ENCODE measurements at regions of chr22 and their contacts with region 1.

Region 1: DNA sequence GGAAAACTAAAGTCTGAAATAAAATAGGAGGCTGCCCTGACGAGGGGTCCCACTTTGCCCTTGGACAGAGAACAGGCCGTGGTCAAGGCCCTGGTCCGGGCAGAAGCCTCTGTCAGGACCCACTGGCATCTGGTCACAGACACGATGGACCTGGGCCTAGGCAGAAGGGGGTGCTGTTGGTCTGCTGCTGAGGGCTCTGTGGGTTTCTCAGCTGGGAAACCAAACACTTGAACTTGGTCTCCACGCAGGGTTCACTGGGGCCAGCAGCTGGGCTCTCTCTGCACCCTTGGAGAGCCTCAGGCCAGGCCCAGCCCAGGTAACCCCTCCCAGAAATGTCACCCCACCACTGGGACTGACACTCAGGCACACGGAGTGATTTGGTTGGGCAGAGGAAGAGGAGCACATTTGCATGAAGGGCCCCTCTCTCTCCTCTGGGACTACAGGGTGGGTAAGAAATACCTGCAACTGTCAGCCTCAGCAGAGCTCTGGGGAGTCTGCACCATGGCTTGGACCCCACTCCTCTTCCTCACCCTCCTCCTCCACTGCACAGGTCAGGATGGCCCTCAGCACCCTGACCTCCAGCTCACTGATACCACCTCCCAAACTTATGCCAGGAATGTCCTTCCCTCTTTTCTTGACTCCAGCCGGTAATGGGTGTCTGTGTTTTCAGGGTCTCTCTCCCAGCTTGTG is 48.1 kb upstream of the TOP3B start:
- DNase-seq: peak; percentile 62
- ATAC-seq: peak; percentile 79
- H3K4me3 Mint-ChIP-seq: peak overlapping the region; percentile 84
- H3K27ac Mint-ChIP-seq: peak overlapping the region; percentile 97
- H3K4me1 Mint-ChIP-seq: peaks cover 84% of the 10 kb centered on the region
- H3K27me3 Mint-ChIP-seq: no peaks in the 10 kb centered on the region
- CTCF ChIP-seq: no peak

Region 2: DNA sequence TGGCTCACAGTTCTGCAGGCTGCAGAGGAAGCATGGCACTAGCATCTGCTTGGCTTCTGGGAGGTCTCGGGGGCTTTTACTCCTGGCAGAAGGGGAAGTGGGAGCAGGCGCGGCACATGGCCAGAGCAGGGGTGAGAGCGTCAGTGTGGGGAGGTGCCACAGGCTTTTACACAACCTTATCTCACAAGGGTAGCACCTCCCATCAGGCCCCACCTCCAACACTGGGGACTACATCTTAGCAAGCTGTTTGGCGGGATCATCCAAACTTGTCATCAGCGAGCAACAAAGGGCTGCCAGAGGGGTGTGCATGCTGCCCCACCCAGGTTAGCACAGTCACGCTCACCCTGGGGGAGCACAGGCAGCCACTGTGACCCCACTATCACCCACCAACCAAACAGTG is 276.1 kb before region 1 on chr22:
- CTCF ChIA-PET with region 1: no interaction called
- POLR2A ChIA-PET with region 1: no interaction called
- intact Hi-C with region 1: no loop called
- DNase-seq: peak; percentile 28
- ATAC-seq: peak; percentile 96
- H3K4me3 Mint-ChIP-seq: no peak overlapping the region
- H3K27ac Mint-ChIP-seq: peak overlapping the region; percentile 50
- H3K4me1 Mint-ChIP-seq: peaks cover 21% of the 10 kb centered on the region
- H3K27me3 Mint-ChIP-seq: no peaks in the 10 kb centered on the region
- CTCF ChIP-seq: no peak

Region 3: GRCh38 chr22:21972293-21972779 is 58.3 kb before region 1 on chr22:
- CTCF ChIA-PET with region 1: interaction called, 11 read pairs
- POLR2A ChIA-PET with region 1: interaction called, 4 read pairs
- intact Hi-C with region 1: no loop called
- DNase-seq: peak; percentile 56
- ATAC-seq: peak; percentile 77
- H3K4me3 Mint-ChIP-seq: no peak overlapping the region
- H3K27ac Mint-ChIP-seq: no peak overlapping the region
- H3K4me1 Mint-ChIP-seq: peaks cover 2% of the 10 kb centered on the region
- H3K27me3 Mint-ChIP-seq: no peaks in the 10 kb centered on the region
- CTCF ChIP-seq: peak; percentile 79

Region 4: GRCh38 chr22:22015631-22016030 is 15.0 kb before region 1 on chr22:
- CTCF ChIA-PET with region 1: no interaction called
- POLR2A ChIA-PET with region 1: no interaction called
- intact Hi-C with region 1: no loop called
- DNase-seq: no peak
- ATAC-seq: no peak
- H3K4me3 Mint-ChIP-seq: no peak overlapping the region
- H3K27ac Mint-ChIP-seq: no peak overlapping the region
- H3K4me1 Mint-ChIP-seq: peaks cover 9% of the 10 kb centered on the region
- H3K27me3 Mint-ChIP-seq: no peaks in the 10 kb centered on the region
- CTCF ChIP-seq: no peak

Region 5: GRCh38 chr22:22060200-22061084 is 29.8 kb after region 1 on chr22:
- CTCF ChIA-PET with region 1: interaction called, 60 read pairs
- POLR2A ChIA-PET with region 1: interaction called, 16 read pairs
- intact Hi-C with region 1: loop called (anchors 1 kb)
- DNase-seq: peak; percentile 69
- ATAC-seq: peak; percentile 73
- H3K4me3 Mint-ChIP-seq: no peak overlapping the region
- H3K27ac Mint-ChIP-seq: peak overlapping the region; percentile 6
- H3K4me1 Mint-ChIP-seq: peaks cover 38% of the 10 kb centered on the region
- H3K27me3 Mint-ChIP-seq: no peaks in the 10 kb centered on the region
- CTCF ChIP-seq: no peak

Region 6: DNA sequence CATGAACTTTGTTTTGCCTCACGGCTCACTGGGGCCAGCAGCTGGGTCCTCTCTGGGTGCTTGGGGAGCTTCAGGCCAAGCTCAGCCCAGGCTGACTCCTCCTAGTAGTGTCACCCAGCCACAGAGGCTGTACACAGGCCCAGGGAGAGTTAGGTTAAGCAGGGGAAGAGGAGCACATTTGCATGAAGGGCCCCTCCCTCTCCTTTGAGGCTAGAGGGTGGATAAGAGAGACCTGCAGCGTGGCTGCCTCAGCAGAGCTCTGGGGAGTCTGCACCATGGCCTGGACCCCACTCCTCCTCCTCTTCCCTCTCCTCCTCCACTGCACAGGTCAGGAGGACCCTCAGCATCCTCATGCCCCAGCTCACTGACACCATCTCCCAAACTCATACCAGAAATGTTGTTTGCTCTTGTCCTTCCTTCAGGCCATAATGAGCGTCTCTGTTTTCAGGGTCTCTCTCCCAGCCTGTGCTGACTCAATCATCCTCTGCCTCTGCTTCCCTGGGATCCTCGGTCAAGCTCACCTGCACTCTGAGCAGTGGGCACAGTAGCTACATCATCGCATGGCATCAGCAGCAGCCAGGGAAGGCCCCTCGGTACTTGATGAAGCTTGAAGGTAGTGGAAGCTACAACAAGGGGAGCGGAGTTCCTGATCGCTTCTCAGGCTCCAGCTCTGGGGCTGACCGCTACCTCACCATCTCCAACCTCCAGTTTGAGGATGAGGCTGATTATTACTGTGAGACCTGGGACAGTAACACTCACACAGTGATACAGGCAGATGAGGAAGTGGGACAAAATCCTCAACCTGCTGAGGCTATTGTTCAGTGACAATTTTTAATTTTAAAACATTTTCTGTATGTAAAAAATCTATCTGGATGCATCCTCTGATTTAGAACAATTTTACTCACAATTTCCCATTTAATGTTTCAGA is 131.6 kb after region 1 on chr22:
- CTCF ChIA-PET with region 1: interaction called, 13 read pairs
- POLR2A ChIA-PET with region 1: interaction called, 13 read pairs
- intact Hi-C with region 1: no loop called
- DNase-seq: peak; percentile 47
- ATAC-seq: peak; percentile 92
- H3K4me3 Mint-ChIP-seq: peak overlapping the region; percentile 85
- H3K27ac Mint-ChIP-seq: peak overlapping the region; percentile 97
- H3K4me1 Mint-ChIP-seq: peaks cover 83% of the 10 kb centered on the region
- H3K27me3 Mint-ChIP-seq: no peaks in the 10 kb centered on the region
- CTCF ChIP-seq: no peak

Region 7: DNA sequence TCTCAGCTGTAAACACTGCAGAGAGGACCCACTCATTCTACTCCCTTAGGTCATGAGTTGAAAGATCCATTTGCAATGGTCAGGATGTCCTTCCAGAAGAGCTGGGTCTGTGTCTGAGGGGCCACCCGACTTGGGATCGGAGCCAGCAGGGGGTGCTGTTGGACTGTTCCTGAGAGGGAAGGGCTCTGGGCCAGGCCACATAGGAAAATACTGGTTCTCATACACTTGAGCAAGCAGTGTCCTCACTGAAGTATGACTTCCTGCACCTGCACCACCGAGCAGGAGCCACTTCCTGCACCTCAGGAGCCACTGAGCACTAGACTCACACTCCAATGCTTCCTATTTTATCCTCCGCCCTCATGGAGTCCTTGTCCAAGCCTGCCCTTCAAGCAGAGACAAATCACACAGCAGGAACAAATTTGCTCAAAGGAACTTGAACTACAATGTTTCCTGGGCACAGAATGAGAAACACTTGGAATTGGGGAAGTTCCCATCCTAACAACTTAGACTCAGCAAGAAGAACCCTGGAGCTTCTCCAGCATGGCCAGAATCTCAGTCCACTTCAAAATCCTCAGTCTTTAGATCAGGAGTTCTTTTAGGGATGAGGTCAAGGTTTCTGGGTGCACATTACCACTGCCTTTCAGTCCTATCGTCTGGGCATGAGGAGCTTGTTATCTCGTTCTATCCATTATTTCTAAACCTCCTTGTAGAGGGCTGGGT is 177.4 kb after region 1 on chr22:
- CTCF ChIA-PET with region 1: interaction called, 39 read pairs
- POLR2A ChIA-PET with region 1: interaction called, 4 read pairs
- intact Hi-C with region 1: no loop called
- DNase-seq: peak; percentile 80
- ATAC-seq: peak; percentile 83
- H3K4me3 Mint-ChIP-seq: peak overlapping the region; percentile 70
- H3K27ac Mint-ChIP-seq: peak overlapping the region; percentile 90
- H3K4me1 Mint-ChIP-seq: peaks cover 56% of the 10 kb centered on the region
- H3K27me3 Mint-ChIP-seq: no peaks in the 10 kb centered on the region
- CTCF ChIP-seq: no peak

Region 8: DNA sequence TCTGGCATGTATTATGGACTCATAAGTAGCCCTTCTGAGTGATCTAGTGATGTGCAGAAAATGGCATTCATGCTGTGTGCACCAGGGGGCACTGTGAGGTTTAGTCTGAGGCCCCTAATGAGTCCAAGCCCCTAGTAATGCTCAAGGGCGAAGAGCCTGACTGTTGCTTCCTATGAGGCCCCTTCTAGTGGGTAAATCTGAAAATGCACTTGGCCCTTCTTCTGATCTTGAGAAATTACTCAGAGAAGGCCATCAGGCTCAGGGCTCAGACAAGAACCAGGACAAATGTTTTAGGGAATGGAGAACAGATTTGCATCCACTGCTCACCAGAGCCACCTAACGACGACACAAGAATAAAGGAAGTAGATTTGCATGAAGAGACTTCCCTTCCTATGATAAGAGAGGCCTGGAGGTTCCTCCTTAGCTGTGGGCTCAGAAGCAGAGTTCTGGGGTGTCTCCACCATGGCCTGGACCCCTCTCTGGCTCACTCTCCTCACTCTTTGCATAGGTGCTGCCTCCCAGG is 689.6 kb after region 1 on chr22:
- CTCF ChIA-PET with region 1: no interaction called
- POLR2A ChIA-PET with region 1: no interaction called
- intact Hi-C with region 1: loop called (anchors 10 kb)
- DNase-seq: peak; percentile 41
- ATAC-seq: peak; percentile 68
- H3K4me3 Mint-ChIP-seq: peak overlapping the region; percentile 68
- H3K27ac Mint-ChIP-seq: peak overlapping the region; percentile 94
- H3K4me1 Mint-ChIP-seq: peaks cover 58% of the 10 kb centered on the region
- H3K27me3 Mint-ChIP-seq: no peaks in the 10 kb centered on the region
- CTCF ChIP-seq: no peak